Posterior cingulate gyrus (tissue), 11 donors: ENCODE measurements at regions of chr3 and their contacts with region 1.

Region 1: GRCh38 chr3:142148792-142149672 is at the start of gene TFDP2:
- DNase-seq: peak; percentile 84 to 99 (median 93)

Region 2: GRCh38 chr3:141659821-141660613 is 489.0 kb before region 1 on chr3:
- intact Hi-C with region 1: no loop called
- DNase-seq: peak; percentile 22 to 91 (median 46)

Region 3: GRCh38 chr3:141875374-141875892 is 273.6 kb before region 1 on chr3:
- intact Hi-C with region 1: loop called (anchors 5 kb)
- DNase-seq: peak; percentile 71 to 97 (median 86)